Activated CD8-positive, alpha-beta memory T cell treated with anti-CD3 and anti-CD28 coated beads, Interleukin-2, amount 10 ng/mL, durations not matched to agents 7 days and 5 days (primary cell): ENCODE measurements at regions of chr6 and their contacts with region 1.

Region 1: DNA sequence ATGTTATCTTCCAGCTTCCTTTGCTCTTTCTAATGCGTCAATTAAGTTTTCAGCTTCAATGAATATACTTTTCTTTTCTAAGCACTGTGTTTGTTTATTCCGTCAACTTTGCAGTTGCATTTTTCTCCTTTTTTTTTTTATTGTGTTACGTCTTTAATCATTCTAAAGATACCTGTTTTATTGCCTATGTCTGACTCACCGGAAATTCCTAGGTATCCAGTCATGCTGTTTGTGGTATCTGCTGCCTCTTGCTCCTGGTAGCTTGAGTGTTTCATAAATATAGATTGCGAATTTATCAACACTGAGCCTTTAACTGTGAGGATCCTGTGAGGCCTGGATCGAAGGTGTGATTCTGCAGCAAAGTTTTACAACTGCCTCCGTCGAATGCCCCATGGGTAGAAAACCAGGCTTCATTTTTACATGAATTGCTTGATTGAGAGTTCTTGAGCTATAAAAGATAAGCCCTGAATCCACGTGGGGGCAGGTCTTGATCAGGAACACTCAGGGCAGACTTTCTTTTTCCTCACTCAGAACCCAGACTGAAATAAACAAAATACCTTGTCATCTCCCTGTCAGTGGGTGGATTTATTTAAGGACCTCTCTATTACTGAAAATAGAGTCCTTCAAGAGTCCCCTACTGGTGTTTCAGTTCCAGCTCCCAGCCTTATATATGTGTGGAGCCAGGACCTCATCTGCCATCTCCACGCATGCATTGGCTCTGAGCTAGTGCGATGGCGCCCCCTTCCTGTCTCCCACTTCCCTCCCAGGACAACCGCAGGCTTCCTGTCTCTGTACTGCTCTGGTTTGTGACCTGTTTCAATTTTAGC is 60.1 kb upstream of the LRRC1 start:
- DNase-seq: peak; percentile 62
- ATAC-seq: peak; percentile 71
- H3K4me3 Mint-ChIP-seq: peak overlapping the region; percentile 10
- H3K27ac Mint-ChIP-seq: peak overlapping the region; percentile 80
- H3K4me1 Mint-ChIP-seq: peaks cover 51% of the 10 kb centered on the region
- H3K27me3 Mint-ChIP-seq: peaks cover 2% of the 10 kb centered on the region

Region 2: DNA sequence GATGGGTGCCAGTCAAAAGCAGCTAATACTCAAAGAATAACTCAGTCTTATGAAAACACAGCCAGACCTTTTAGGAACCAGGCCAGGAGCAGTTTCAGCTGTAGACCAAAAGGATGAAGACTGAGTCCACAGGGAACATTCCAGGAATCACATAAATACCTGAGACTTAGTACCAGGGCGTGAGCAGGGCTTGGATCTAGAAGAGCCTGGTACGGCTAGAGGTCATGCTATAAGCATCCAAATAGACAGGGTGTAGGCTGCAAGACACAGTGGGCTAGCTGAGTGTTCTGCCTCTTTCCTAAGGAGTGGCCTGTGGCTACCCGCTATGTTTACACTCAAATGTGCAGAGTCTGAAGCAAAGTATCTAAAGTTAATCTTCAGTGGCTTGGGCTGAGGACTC is 30.6 kb after region 1 on chr6:
- CTCF ChIA-PET with region 1: no interaction called
- DNase-seq: no peak
- ATAC-seq: no peak
- H3K4me3 Mint-ChIP-seq: no peak overlapping the region
- H3K27ac Mint-ChIP-seq: no peak overlapping the region
- H3K4me1 Mint-ChIP-seq: no peaks in the 10 kb centered on the region
- H3K27me3 Mint-ChIP-seq: peaks cover 12% of the 10 kb centered on the region

Region 3: DNA sequence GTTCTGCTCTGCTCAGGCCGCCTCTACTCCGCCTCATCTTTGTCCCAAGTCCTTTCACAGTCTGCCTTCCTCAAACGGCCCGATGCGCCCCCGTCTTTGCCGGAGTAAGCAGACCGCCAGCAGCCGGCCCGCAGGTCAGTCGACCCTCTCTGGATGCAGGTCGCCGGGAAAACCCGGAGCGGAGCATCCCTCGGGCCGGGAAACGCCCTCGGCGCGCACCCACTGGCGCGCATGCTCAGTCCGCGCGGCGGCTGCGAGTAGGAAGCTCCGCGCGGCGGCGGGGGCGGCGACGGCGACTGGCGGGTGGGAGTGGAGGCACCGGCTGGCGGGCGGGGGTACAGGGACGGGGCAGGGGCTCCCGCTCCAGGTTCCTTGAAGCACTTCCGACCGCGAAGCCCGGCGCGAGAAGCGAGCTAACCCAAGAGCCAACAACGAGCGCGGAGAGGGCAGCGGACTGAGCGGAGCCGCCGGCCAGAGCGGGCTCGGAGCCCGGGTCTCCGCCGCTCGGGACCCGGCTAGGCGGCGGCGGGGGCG is 60.1 kb after region 1 on chr6 and contains the start of gene LRRC1:
- CTCF ChIA-PET with region 1: interaction called, 13 read pairs
- DNase-seq: peak; percentile 91
- ATAC-seq: peak; percentile 84
- H3K4me3 Mint-ChIP-seq: peak within 1 kb of the TSS; percentile 89
- H3K27ac Mint-ChIP-seq: peak within 1 kb of the TSS; percentile 83
- H3K4me1 Mint-ChIP-seq: peaks cover 24% of the 10 kb centered on the region
- H3K27me3 Mint-ChIP-seq: peaks cover 46% of the 10 kb centered on the region
- total RNA-seq, gene LRRC1: 4.5 to 4.6 TPM

Region 4: DNA sequence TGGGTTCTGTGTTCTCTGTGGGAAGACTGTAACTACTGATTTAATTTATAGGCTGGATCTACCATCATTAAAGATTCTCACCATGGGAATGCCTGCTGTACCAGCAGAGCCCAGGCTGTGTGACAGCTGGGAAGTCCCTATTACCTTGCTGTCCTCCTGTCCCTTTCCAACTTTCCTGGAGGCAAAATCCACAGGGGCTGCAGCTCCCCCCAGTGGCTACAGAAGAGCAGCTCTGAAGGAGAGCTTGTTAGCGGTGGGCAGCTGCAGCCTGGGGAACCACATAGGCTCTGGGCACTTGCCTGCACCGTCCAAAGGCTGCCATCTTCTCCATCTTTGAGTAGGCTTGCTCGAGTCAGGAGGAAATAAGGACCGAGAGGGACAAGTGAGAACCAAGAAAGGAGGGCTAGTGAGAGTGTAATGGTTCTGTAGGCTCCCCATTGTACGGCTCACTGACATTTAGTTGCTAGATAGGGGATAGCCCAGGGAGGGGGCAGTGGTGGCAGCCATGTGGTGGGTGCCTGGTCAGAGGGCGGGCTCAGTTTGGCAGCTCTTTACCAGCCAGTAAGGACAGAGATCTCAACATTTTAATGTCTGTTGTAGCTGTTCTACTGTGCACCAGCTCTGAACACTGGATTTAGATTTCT is 221.5 kb after region 1 on chr6:
- CTCF ChIA-PET with region 1: interaction called, 16 read pairs
- DNase-seq: peak; percentile 51
- ATAC-seq: peak; percentile 58
- H3K4me3 Mint-ChIP-seq: no peak overlapping the region
- H3K27ac Mint-ChIP-seq: no peak overlapping the region
- H3K4me1 Mint-ChIP-seq: no peaks in the 10 kb centered on the region
- H3K27me3 Mint-ChIP-seq: peaks cover 27% of the 10 kb centered on the region